ENCODE measurements at regions of chr17 and their contacts with region 1.

Region 1: DNA sequence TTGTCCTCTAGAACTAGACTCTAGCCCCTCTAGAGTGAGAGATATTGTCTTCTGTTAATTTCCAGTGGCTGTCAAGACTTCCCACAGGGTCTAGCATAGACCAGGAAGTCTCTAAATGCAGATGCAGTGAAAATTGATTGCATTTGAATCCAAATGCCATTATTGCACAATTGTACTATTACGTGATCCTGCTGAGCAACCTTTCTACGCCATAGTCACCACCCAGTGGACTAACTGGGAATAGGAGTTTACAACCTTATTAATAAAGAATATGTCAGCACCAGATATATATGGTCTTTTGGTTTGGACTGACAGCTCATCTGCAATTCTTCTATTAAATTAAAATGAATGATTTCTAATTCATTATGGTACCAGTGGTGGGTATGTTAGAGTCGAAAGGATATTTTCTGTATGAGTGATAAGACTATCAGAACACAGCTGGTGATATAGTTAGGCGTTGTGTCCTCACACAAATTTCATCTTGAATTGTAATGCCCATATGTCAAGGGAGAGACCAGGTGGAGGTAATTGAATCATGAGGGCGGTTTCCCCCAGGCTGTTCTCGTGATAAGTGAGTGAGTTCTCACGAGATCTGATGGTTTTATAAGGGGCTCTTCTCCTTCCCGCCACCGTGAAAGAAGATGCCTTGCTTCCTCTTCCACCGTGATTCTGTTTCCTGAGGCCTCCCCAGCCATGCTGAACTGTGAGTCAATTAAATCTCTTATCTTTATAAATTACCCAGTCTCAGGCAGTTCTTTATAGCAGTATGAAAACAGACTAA is 138.9 kb upstream of the CA10 start:
- DNase-seq: peak in 1 of 2 experiments; percentile 26
- H3K4me3 ChIP-seq: no peak overlapping the region
- H3K4me3 Mint-ChIP-seq: no peak overlapping the region
- H3K27ac Mint-ChIP-seq: no peak overlapping the region
- H3K4me1 ChIP-seq: no peaks in the 10 kb centered on the region
- H3K4me1 Mint-ChIP-seq: no peaks in the 10 kb centered on the region
- H3K27me3 ChIP-seq: no peaks in the 10 kb centered on the region
- H3K27me3 Mint-ChIP-seq: peaks cover 2% of the 10 kb centered on the region
- CTCF ChIP-seq: peak; percentile 44 to 48

Region 2: DNA sequence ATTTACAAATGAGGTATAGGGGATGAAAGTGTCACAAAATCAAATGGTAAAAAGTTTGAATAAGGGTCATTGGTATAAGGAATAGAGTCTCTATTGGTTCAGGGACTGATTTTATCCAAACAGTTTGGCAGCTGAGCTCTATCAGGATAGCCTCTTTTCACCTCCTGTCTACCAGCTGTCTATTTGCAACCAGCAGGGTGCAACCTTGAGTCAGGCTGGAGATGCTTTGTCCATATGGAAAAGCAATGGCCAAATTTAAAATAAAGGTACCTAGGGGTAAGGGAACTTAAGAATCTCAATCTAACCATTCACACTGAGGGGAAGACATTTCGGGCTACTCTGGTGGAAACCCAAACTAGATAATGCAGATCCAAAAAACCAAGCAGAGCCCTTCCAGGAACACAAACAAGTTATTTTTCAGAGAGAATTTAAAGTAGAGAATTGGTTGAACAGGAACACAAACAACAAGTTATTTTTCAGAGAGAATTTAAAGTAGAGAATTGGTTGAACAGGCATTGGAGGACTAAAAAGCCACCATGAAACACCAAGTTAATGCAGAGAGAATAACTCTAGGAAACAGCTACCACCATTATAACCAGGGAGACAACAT is 126.4 kb before region 1 on chr17:
- CTCF ChIA-PET with region 1: no interaction called
- POLR2A ChIA-PET with region 1: no interaction called
- intact Hi-C with region 1: loop called (anchors 1 kb)
- DNase-seq: peak; percentile 55 to 61
- H3K4me3 ChIP-seq: no peak overlapping the region
- H3K4me3 Mint-ChIP-seq: no peak overlapping the region
- H3K27ac Mint-ChIP-seq: no peak overlapping the region
- H3K4me1 ChIP-seq: no peaks in the 10 kb centered on the region
- H3K4me1 Mint-ChIP-seq: no peaks in the 10 kb centered on the region
- H3K27me3 ChIP-seq: no peaks in the 10 kb centered on the region
- H3K27me3 Mint-ChIP-seq: peaks cover 5% of the 10 kb centered on the region
- CTCF ChIP-seq: peak; percentile 62 to 83

Region 3: DNA sequence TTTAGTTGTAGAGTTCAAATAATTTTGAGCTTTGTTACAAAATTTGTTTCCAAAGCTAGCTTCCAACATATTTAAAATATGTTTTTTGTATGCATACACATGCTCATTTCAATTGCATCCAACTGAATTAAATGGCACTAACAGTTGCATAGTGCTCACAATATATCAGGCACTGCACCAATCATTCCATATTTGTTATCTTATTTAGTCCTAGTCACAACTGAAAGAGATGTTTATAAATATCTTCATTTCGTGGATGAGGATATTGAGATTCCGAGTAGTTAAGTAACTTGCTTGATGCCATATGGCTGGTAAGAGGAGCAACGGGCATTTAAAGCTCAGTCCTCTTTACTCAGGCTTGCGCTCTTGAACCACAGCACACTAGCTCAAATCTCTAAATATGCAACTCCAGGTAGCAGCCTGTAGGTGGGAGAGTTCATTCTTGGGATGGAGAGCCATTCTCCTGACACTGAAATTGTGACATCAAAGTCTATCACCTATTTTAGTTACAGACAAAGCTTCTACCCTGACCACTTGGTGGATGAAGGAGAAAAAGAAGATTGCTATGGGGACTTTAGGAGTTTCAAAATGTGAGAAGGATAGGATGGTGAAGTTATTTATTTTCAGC is 20.9 kb before region 1 on chr17:
- CTCF ChIA-PET with region 1: no interaction called
- POLR2A ChIA-PET with region 1: no interaction called
- intact Hi-C with region 1: no loop called
- DNase-seq: no peak
- H3K4me3 ChIP-seq: no peak overlapping the region
- H3K4me3 Mint-ChIP-seq: no peak overlapping the region
- H3K27ac Mint-ChIP-seq: no peak overlapping the region
- H3K4me1 ChIP-seq: 0 out of 2 replicates have a peak, but pooled peaks cover 4% of the 10 kb centered on the region
- H3K4me1 Mint-ChIP-seq: no peaks in the 10 kb centered on the region
- H3K27me3 ChIP-seq: no peaks in the 10 kb centered on the region
- H3K27me3 Mint-ChIP-seq: peaks cover 6% of the 10 kb centered on the region
- CTCF ChIP-seq: no peak

Measured in Caco-2 (cell line).